Naive thymus-derived CD4-positive, alpha-beta T cell (primary cell): ENCODE measurements at regions of chr6 and their contacts with region 1.

Region 1: GRCh38 chr6:41787219-41787917 is at the start of gene TOMM6:
- DNase-seq: peak; percentile 87 to 96 (median 94)
- ATAC-seq: peak; percentile 88
- H3K4me3 ChIP-seq: peak within 1 kb of the TSS; percentile 97
- H3K4me3 Mint-ChIP-seq: peak within 1 kb of the TSS; percentile 91 to 99 (median 97)
- H3K27ac ChIP-seq: peak within 1 kb of the TSS; percentile 89
- H3K27ac Mint-ChIP-seq: peak within 1 kb of the TSS; percentile 95 to 99 (median 98)
- H3K4me1 ChIP-seq: peaks cover 6 to 9% of the 10 kb centered on the region in 2 donors
- H3K4me1 Mint-ChIP-seq: peaks cover 8 to 29% (median 17%) of the 10 kb centered on the region in 7 donors
- H3K27me3 ChIP-seq: no peaks in the 10 kb centered on the region
- H3K27me3 Mint-ChIP-seq: peaks cover 0 to 14% (median 0%) of the 10 kb centered on the region in 5 donors
- total RNA-seq, gene TOMM6: 114 to 193 (median 128) TPM

Region 2: GRCh38 chr6:41247288-41247865 is 540.0 kb before region 1 on chr6:
- CTCF ChIA-PET with region 1: no interaction called
- POLR2A ChIA-PET with region 1: no interaction called
- intact Hi-C with region 1: no loop called
- DNase-seq: no peak
- ATAC-seq: no peak
- H3K4me3 ChIP-seq: no peak overlapping the region
- H3K4me3 Mint-ChIP-seq: peak overlapping the region in 1 of 10 donors; percentile 19
- H3K27ac ChIP-seq: no peak overlapping the region
- H3K27ac Mint-ChIP-seq: peak overlapping the region in 2 of 9 donors; percentile 7 to 62
- H3K4me1 ChIP-seq: no peaks in the 10 kb centered on the region
- H3K4me1 Mint-ChIP-seq: peaks cover 0 to 30% (median 15%) of the 10 kb centered on the region in 7 donors
- H3K27me3 ChIP-seq: no peaks in the 10 kb centered on the region
- H3K27me3 Mint-ChIP-seq: peaks cover 0 to 39% (median 0%) of the 10 kb centered on the region in 5 donors

Region 3: GRCh38 chr6:41683510-41684310 is 103.7 kb before region 1 on chr6:
- CTCF ChIA-PET with region 1: interaction called, 3 read pairs
- POLR2A ChIA-PET with region 1: no interaction called
- intact Hi-C with region 1: loop called in 1 of 2 experiments (anchors 2 kb)
- DNase-seq: peak; percentile 57 to 83 (median 76)
- ATAC-seq: peak; percentile 91
- H3K4me3 ChIP-seq: peak overlapping the region; percentile 61
- H3K4me3 Mint-ChIP-seq: peak overlapping the region; percentile 51 to 84 (median 78)
- H3K27ac ChIP-seq: peak overlapping the region; percentile 53
- H3K27ac Mint-ChIP-seq: peak overlapping the region in 8 of 9 donors; percentile 43 to 86 (median 76)
- H3K4me1 ChIP-seq: peaks cover 3 to 4% of the 10 kb centered on the region in 2 donors
- H3K4me1 Mint-ChIP-seq: peaks cover 0 to 15% (median 11%) of the 10 kb centered on the region in 7 donors
- H3K27me3 ChIP-seq: no peaks in the 10 kb centered on the region
- H3K27me3 Mint-ChIP-seq: peaks cover 0 to 4% (median 0%) of the 10 kb centered on the region in 5 donors

Region 4: DNA sequence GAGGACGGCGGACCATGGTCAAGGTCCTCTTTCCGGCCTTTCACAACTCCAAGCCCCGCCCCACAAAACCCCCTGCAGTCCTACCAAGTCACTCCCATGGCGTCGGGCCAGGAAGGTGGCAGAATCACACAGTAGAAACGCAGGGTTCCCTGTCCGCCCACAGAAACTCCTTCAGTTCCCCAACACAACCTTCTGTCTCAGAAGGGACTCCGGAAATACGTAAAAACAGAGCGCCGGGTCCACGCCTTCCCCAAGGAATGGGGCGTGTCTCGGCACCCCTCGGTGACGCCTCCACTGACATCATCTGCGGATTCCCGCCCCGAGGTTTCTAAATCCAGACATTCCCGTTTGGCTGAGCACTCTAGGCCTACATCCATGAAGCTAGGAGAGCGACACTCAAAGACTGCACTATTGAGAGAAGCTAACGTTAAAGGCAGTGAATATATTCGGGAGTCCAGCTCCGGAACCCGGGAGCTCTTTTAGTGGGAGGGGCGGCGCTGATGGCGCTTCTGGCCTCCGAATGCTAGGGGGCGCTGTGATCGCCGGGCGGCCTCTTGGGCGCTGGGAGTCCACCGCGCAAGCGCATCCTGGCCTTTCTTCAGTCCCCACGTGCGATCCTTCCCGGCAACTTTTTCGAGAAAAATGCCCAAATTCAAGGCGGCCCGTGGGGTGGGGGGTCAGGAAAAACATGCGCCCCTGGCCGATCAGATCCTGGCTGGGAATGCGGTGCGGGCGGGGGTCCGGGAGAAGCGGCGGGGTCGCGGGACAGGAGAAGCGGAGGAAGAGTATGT is 133.7 kb after region 1 on chr6 and contains the starts of genes BYSL and MED20:
- CTCF ChIA-PET with region 1: interaction called, 9 read pairs
- POLR2A ChIA-PET with region 1: interaction called, 16 read pairs
- intact Hi-C with region 1: loop called (anchors 1 kb)
- DNase-seq: peak; percentile 93 to 99 (median 96)
- ATAC-seq: peak; percentile 96
- H3K4me3 ChIP-seq: peak within 1 kb of the TSS; percentile 76
- H3K4me3 Mint-ChIP-seq: peak within 1 kb of the TSS; percentile 95 to 100 (median 99)
- H3K27ac ChIP-seq: peak within 1 kb of the TSS; percentile 95
- H3K27ac Mint-ChIP-seq: peak within 1 kb of the TSS; percentile 94 to 100 (median 99)
- H3K4me1 ChIP-seq: peaks cover 20 to 24% of the 10 kb centered on the region in 2 donors
- H3K4me1 Mint-ChIP-seq: peaks cover 27 to 58% (median 50%) of the 10 kb centered on the region in 7 donors
- H3K27me3 ChIP-seq: no peaks in the 10 kb centered on the region
- H3K27me3 Mint-ChIP-seq: peaks cover 0 to 3% (median 0%) of the 10 kb centered on the region in 5 donors
- total RNA-seq, gene BYSL: 3.9 to 35.7 (median 8.1) TPM
- total RNA-seq, gene MED20: 4.5 to 21.7 (median 9.4) TPM

Region 5: GRCh38 chr6:42104095-42104806 is 316.9 kb after region 1 on chr6:
- CTCF ChIA-PET with region 1: no interaction called
- POLR2A ChIA-PET with region 1: interaction called, 6 read pairs
- intact Hi-C with region 1: loop called in 1 of 2 experiments (anchors 1 kb)
- DNase-seq: peak; percentile 39 to 79 (median 73)
- ATAC-seq: peak; percentile 90
- H3K4me3 ChIP-seq: peak overlapping the region; percentile 68
- H3K4me3 Mint-ChIP-seq: peak overlapping the region; percentile 66 to 89 (median 70)
- H3K27ac ChIP-seq: peak overlapping the region; percentile 41
- H3K27ac Mint-ChIP-seq: peak overlapping the region in 5 of 9 donors; percentile 20 to 78 (median 58)
- H3K4me1 ChIP-seq: peaks cover 0 to 4% of the 10 kb centered on the region in 2 donors
- H3K4me1 Mint-ChIP-seq: peaks cover 0 to 28% (median 9%) of the 10 kb centered on the region in 7 donors
- H3K27me3 ChIP-seq: no peaks in the 10 kb centered on the region
- H3K27me3 Mint-ChIP-seq: no peaks in the 10 kb centered on the region

Region 6: DNA sequence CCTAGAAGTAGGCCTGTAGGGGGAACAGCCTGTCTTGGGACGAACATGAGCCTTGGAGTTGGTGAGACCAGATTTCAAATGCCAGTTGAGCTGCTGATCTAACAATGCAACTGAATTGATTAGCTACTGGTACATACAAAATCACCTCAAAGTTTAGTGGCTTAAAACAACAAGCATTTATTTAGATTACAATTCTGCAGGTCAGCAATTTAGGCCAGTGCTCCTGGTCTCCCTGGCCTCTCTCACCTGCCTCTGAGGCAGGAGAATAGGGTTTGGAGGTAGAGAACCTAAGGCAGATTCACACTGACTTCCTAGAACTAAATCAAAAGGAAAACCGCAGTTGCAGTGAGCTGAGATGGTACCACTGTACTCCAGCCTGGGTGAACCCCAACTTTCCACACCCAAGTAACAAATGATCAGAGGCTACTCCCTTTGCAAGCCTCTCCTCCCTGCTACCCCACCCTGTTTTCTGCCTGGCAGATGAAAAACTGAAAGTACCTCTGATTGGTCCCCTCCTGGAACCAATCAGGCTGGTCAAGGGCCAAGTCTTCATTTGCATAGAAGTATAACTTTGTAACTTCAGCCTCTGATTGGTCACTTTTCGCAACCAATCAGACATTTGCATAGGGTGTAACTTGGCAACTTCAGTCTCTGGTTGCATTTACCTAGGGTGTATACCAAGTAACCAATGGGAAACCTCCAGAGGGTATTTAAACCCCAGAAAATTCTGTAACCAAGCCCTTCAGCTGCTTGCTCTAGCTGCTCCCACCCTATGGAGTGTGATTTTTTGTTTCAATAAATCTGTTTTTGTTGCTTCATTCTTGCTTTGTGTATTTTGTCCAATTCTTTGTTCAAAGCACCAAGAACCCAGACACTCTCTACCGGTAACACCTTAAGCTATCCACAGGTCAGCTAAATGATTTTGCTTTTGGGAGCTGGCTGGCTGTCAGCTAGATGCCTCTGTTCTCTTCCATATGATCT is 768.4 kb after region 1 on chr6:
- CTCF ChIA-PET with region 1: no interaction called
- POLR2A ChIA-PET with region 1: no interaction called
- intact Hi-C with region 1: no loop called
- DNase-seq: no peak
- ATAC-seq: peak; percentile 61
- H3K4me3 ChIP-seq: no peak overlapping the region
- H3K4me3 Mint-ChIP-seq: no peak overlapping the region
- H3K27ac ChIP-seq: no peak overlapping the region
- H3K27ac Mint-ChIP-seq: peak overlapping the region in 1 of 9 donors; percentile 30
- H3K4me1 ChIP-seq: no peaks in the 10 kb centered on the region
- H3K4me1 Mint-ChIP-seq: peaks cover 0 to 19% (median 8%) of the 10 kb centered on the region in 7 donors
- H3K27me3 ChIP-seq: no peaks in the 10 kb centered on the region
- H3K27me3 Mint-ChIP-seq: peaks cover 0 to 15% (median 4%) of the 10 kb centered on the region in 5 donors

Region 7: GRCh38 chr6:42879372-42880239 is 1092.2 kb after region 1 on chr6 and contains the start of gene RPL7L1:
- CTCF ChIA-PET with region 1: no interaction called
- POLR2A ChIA-PET with region 1: interaction called, 6 read pairs
- intact Hi-C with region 1: loop called in 1 of 2 experiments (anchors 1 kb)
- DNase-seq: peak; percentile 70 to 93 (median 88)
- ATAC-seq: peak; percentile 95
- H3K4me3 ChIP-seq: peak within 1 kb of the TSS; percentile 82
- H3K4me3 Mint-ChIP-seq: peak within 1 kb of the TSS; percentile 93 to 99 (median 96)
- H3K27ac ChIP-seq: peak within 1 kb of the TSS; percentile 89
- H3K27ac Mint-ChIP-seq: peak within 1 kb of the TSS; percentile 98 to 100 (median 99)
- H3K4me1 ChIP-seq: peaks cover 5 to 7% of the 10 kb centered on the region in 2 donors
- H3K4me1 Mint-ChIP-seq: peaks cover 7 to 40% (median 29%) of the 10 kb centered on the region in 7 donors
- H3K27me3 ChIP-seq: no peaks in the 10 kb centered on the region
- H3K27me3 Mint-ChIP-seq: no peaks in the 10 kb centered on the region
- total RNA-seq, gene RPL7L1: 65.6 to 91.7 (median 78.1) TPM

Region 8: DNA sequence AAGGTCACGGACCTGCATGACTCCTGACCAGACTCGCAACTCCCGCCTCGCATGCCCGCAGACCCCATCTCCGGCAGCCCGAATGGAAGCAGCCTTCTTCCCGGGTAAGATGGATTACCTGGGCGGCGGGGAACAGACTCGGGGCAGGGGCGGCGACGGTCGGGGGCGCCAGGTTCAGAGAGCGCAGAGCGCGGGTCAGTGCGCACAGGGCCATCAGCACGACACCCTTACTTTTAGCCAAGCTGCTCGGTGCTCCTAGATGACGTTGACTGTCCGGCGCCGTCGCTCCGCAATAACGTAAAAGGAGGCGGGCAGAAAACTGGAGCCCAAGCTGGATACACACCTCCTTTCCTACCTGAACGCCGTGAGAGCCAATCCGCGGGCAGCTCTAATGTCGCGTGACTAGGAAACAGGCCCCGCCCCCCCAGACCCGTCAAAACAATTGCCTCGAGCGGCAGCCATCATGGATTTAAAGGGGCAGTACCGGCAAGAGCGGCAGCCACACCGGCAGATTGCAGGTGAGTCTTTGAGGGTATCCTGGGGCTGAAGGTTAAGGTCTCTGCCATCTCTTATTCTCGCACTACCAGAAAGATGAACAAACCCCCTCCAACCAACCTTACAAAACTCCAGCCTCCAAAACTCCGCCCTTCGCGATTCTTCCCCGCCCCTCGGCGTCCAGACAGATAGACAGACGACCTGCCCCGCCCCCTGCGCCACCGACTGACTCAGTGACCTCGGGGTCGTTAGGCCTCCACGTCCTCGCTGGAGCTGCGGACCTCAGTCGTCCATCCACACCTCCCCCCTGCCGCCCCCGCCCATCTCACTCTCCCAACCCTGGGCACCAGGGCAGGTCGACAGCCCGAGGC is 1272.0 kb after region 1 on chr6 and contains the starts of genes KLC4 and MRPL2:
- CTCF ChIA-PET with region 1: no interaction called
- POLR2A ChIA-PET with region 1: no interaction called
- intact Hi-C with region 1: loop called in 1 of 2 experiments (anchors 2 kb)
- DNase-seq: peak; percentile 79 to 98 (median 95)
- ATAC-seq: peak; percentile 99
- H3K4me3 ChIP-seq: peak within 1 kb of the TSS; percentile 80
- H3K4me3 Mint-ChIP-seq: peak within 1 kb of the TSS; percentile 88 to 100 (median 96)
- H3K27ac ChIP-seq: peak within 1 kb of the TSS; percentile 88
- H3K27ac Mint-ChIP-seq: peak within 1 kb of the TSS; percentile 95 to 100 (median 99)
- H3K4me1 ChIP-seq: peaks cover 0 to 21% of the 10 kb centered on the region in 2 donors
- H3K4me1 Mint-ChIP-seq: peaks cover 28 to 50% (median 45%) of the 10 kb centered on the region in 7 donors
- H3K27me3 ChIP-seq: no peaks in the 10 kb centered on the region
- H3K27me3 Mint-ChIP-seq: no peaks in the 10 kb centered on the region
- total RNA-seq, gene KLC4: 16.5 to 56.9 (median 42.5) TPM
- total RNA-seq, gene MRPL2: 32.0 to 57.5 (median 47.7) TPM